ENCODE measurements at regions of chr19 and their contacts with region 1.

Region 1: GRCh38 chr19:39532233-39533002 is at the start of gene EID2B:
- DNase-seq: peak; percentile 100
- ATAC-seq: peak; percentile 95
- H3K4me3 ChIP-seq: peak within 1 kb of the TSS; percentile 35 to 56
- H3K27ac ChIP-seq: peak within 1 kb of the TSS; percentile 80
- H3K4me1 ChIP-seq: peaks cover 25% of the 10 kb centered on the region
- H3K27me3 ChIP-seq: no peaks in the 10 kb centered on the region
- CTCF ChIP-seq: no peak
- total RNA-seq, gene EID2B: 37.7 TPM

Region 2: DNA sequence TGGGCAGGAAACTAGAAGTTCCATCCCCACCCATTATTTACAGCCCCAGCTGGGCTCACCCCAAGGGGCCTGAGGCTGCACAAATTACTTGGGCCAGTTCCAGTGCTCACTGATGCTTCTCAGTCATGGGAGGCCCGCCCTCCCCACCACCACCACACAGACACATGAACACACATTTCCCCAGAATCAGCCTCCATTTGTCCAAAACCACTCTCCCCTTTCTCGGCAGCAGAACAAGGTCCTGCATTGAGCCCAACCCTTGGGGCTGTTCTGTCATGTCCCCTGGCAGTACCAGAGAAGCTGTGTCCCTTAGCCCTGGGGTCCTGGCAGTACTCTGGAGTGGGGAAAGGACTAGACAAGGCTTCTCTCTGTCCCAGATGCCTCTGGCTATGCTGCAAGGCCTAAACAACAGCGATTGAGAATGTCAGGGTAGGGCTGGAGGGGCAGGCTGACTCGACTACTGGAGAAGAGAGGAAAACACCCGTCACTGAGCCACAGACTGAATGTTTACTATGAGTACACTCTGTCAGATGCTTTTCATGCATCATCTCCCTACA is 168.4 kb before region 1 on chr19:
- CTCF ChIA-PET with region 1: interaction called, 4 read pairs
- POLR2A ChIA-PET with region 1: interaction called, 12 read pairs
- in situ Hi-C with region 1: no loop called
- intact Hi-C with region 1: no loop called
- DNase-seq: no peak
- ATAC-seq: peak; percentile 1; the same call in 1 of the 2 replicates
- H3K4me3 ChIP-seq: no peak overlapping the region
- H3K27ac ChIP-seq: no peak overlapping the region
- H3K4me1 ChIP-seq: peaks cover 5% of the 10 kb centered on the region; the same call in 1 of the 2 replicates
- H3K27me3 ChIP-seq: no peaks in the 10 kb centered on the region
- CTCF ChIP-seq: no peak

Region 3: GRCh38 chr19:39428283-39429112 is 103.9 kb before region 1 on chr19:
- CTCF ChIA-PET with region 1: interaction called, 12 read pairs
- POLR2A ChIA-PET with region 1: interaction called, 196 read pairs
- in situ Hi-C with region 1: no loop called
- intact Hi-C with region 1: no loop called
- DNase-seq: peak; percentile 92
- ATAC-seq: peak; percentile 70
- H3K4me3 ChIP-seq: peak overlapping the region; percentile 0 to 17; a peak in 3 of 4 replicates
- H3K27ac ChIP-seq: peak overlapping the region; percentile 86
- H3K4me1 ChIP-seq: peaks cover 75% of the 10 kb centered on the region
- H3K27me3 ChIP-seq: no peaks in the 10 kb centered on the region
- CTCF ChIP-seq: no peak

Region 4: GRCh38 chr19:39494661-39495060 is 37.8 kb before region 1 on chr19:
- CTCF ChIA-PET with region 1: interaction called, 130 read pairs
- POLR2A ChIA-PET with region 1: interaction called, 18 read pairs
- in situ Hi-C with region 1: no loop called
- intact Hi-C with region 1: loop called (anchors 2 kb)
- DNase-seq: no peak
- ATAC-seq: no peak
- H3K4me3 ChIP-seq: no peak overlapping the region
- H3K27ac ChIP-seq: no peak overlapping the region
- H3K4me1 ChIP-seq: peaks cover 20% of the 10 kb centered on the region
- H3K27me3 ChIP-seq: peaks cover 4% of the 10 kb centered on the region
- CTCF ChIP-seq: no peak

Region 5: DNA sequence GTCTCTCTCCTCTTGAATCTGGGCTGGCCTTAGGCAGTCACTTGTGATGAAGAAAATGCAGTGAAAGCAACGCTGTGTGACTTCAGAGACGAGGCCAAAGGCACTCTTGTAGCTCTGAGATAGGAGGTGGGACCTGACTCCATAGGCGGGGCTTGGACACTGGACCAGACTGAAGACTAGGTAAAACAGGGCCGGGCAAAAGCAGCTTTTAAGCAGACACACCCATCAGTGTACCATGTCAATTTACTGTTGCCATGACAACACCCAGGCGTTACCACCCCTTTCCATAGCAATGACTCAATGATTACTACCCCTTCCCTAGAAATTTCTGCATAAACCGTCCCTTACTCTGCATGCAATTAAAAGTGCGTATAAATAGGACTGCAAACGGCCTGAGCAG is 14.2 kb after region 1 on chr19:
- CTCF ChIA-PET with region 1: interaction called, 15 read pairs
- POLR2A ChIA-PET with region 1: no interaction called
- in situ Hi-C with region 1: no loop called
- intact Hi-C with region 1: no loop called
- DNase-seq: no peak
- ATAC-seq: no peak; the same call in 1 of the 2 replicates
- H3K4me3 ChIP-seq: no peak overlapping the region
- H3K27ac ChIP-seq: no peak overlapping the region
- H3K4me1 ChIP-seq: peaks cover 6% of the 10 kb centered on the region
- H3K27me3 ChIP-seq: peaks cover 20% of the 10 kb centered on the region
- CTCF ChIP-seq: no peak

Region 6: DNA sequence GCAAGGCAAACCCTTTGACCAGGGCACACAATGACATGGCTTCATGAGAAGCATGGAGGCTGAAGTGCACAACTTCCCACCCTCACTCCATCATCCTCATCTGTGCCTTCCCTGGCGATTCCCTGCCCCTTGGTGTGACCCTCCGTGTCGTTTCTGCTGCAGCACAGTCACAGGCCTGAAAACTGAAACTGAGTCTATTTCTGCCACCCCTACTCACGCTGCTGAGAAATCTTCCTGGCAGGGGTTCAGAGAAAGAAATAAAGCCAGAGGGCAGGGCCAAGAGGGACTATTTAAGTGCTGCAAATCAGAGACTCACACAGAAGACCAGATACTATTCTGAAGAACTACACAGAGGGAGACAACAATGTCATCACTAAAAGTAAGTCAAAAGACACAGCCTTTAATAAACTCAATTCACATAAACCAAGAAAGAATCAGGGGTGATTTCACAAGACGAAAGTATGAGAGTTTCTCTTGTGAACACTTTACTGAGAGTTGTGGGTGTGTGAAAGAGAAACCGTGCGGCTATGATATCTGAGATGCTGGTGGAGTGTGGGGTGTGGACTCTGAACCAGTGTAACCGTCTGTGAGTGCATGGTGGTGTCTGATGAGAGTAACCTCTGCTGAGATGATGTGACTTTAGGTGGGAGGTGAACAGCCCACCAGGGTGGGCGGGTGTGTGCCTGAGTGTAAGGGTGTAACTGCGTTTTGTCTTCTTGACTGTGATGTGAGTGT is 146.8 kb after region 1 on chr19:
- CTCF ChIA-PET with region 1: interaction called, 10 read pairs
- POLR2A ChIA-PET with region 1: interaction called, 4 read pairs
- in situ Hi-C with region 1: no loop called
- intact Hi-C with region 1: no loop called
- DNase-seq: no peak
- ATAC-seq: peak; percentile 6
- H3K4me3 ChIP-seq: no peak overlapping the region
- H3K27ac ChIP-seq: no peak overlapping the region
- H3K4me1 ChIP-seq: peaks cover 11% of the 10 kb centered on the region
- H3K27me3 ChIP-seq: peaks cover 54% of the 10 kb centered on the region
- CTCF ChIP-seq: no peak